IMR-90 (cell line): ENCODE measurements at regions of chr19 and their contacts with region 1.

Region 1: GRCh38 chr19:17135001-17135853 is 59.6 kb downstream of the MYO9B start:
- DNase-seq: peak; percentile 97
- ATAC-seq: peak; percentile 97
- H3K4me3 ChIP-seq: peak overlapping the region; percentile 20; the same call in 1 of the 2 replicates
- H3K27ac ChIP-seq: peak overlapping the region; percentile 91
- H3K4me1 ChIP-seq: peaks cover 11% of the 10 kb centered on the region
- H3K27me3 ChIP-seq: no peaks in the 10 kb centered on the region
- CTCF ChIP-seq: peak; percentile 39
- POLR2A ChIP-seq: peak; percentile 64; the same call in 1 of the 2 replicates
- RAD21 ChIP-seq: peak; percentile 41; the same call in 1 of the 2 replicates

Region 2: GRCh38 chr19:17107525-17108452 is 27.4 kb before region 1 on chr19:
- CTCF ChIA-PET with region 1: interaction called, 4 read pairs
- POLR2A ChIA-PET with region 1: interaction called, 6 read pairs
- dilution Hi-C with region 1: no loop called
- in situ Hi-C with region 1: no loop called
- intact Hi-C with region 1: loop called (anchors 2 kb)
- DNase-seq: peak; percentile 98
- ATAC-seq: peak; percentile 97
- H3K4me3 ChIP-seq: no peak overlapping the region
- H3K27ac ChIP-seq: peak overlapping the region; percentile 86
- H3K4me1 ChIP-seq: peaks cover 7% of the 10 kb centered on the region
- H3K27me3 ChIP-seq: no peaks in the 10 kb centered on the region
- CTCF ChIP-seq: no peak
- POLR2A ChIP-seq: 0 out of 2 replicates have a peak, but pooled peaks have one; percentile 41
- RAD21 ChIP-seq: peak; percentile 23; the same call in 1 of the 2 replicates

Region 3: GRCh38 chr19:17116996-17117702 is 18.1 kb before region 1 on chr19:
- CTCF ChIA-PET with region 1: no interaction called
- POLR2A ChIA-PET with region 1: interaction called, 13 read pairs
- dilution Hi-C with region 1: no loop called
- in situ Hi-C with region 1: no loop called
- intact Hi-C with region 1: no loop called
- DNase-seq: no peak
- ATAC-seq: no peak
- H3K4me3 ChIP-seq: no peak overlapping the region
- H3K27ac ChIP-seq: no peak overlapping the region
- H3K4me1 ChIP-seq: peaks cover 11% of the 10 kb centered on the region
- H3K27me3 ChIP-seq: no peaks in the 10 kb centered on the region
- CTCF ChIP-seq: no peak
- POLR2A ChIP-seq: no peak
- RAD21 ChIP-seq: no peak